Activated B cell treated with CpG ODN at 0.5 μM for 24 hours (primary cell): ENCODE measurements at regions of chr1 and their contacts with region 1.

Region 1: DNA sequence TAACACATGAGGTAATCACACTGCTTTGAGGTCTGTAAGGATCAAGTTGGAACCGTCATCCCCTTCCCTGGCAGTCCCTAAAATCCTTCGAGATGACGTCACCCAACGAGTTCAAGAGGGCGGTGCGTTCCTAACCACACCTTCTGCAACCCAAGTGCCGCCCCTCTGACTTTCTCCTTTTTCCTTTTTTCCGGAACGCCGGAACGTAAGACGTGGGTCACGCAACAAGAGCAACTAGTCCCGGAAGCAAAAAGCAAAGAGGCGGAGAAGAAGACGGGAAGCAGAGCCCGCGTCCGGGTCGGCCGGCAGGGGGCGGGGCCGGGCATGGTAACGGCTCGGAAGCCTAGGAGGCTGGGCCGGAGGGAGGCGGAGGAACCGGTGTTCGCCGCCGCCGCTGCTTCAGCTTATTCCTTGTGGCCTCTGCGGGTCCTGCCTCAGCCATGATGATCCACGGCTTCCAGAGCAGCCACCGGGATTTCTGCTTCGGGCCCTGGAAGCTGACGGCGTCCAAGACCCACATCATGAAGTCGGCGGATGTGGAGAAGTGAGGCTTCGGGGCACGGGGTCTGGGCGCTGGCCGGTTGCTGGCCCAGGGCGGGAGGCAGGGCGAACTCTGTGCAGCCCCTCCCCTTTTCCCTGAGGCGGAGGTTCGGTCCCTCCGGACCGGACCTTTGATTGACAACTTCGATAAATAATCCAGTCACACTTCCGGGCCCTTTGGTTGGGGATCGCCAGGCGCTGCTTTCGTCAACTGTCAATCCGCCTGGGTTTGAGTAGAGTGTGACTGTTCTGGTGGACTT is at the start of gene TIPRL:
- DNase-seq: peak; percentile 92
- ATAC-seq: peak; percentile 88
- H3K4me3 Mint-ChIP-seq: no peak within 1 kb of the TSS
- H3K27ac Mint-ChIP-seq: no peak within 1 kb of the TSS
- H3K4me1 Mint-ChIP-seq: peaks cover 2% of the 10 kb centered on the region
- H3K27me3 Mint-ChIP-seq: peaks cover 8% of the 10 kb centered on the region
- CTCF ChIP-seq: no peak
- total RNA-seq, gene TIPRL: 25.5 and 29.8 TPM in 2 replicates

Region 2: DNA sequence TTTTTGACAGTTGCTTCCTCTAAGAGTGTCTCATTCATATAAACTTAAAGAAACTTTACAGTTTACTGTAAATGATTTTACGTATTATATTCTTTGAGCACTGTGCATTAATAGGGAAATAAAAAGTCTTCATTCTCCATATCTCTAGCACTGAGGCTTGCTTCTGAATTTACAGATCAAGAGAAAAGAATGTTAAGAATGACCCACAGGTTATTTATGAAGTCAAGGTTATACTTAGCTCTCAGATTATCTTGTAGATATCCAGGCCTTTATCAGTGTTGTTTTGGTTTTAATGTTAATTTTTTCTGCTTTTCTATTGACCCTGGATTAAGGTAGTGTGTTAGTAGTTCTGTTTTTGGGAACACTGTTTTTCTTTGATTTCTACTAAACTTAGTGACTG is 133.5 kb before region 1 on chr1:
- CTCF ChIA-PET with region 1: no interaction called
- POLR2A ChIA-PET with region 1: no interaction called
- intact Hi-C with region 1: no loop called
- DNase-seq: no peak
- ATAC-seq: no peak
- H3K4me3 Mint-ChIP-seq: no peak overlapping the region
- H3K27ac Mint-ChIP-seq: no peak overlapping the region
- H3K4me1 Mint-ChIP-seq: no peaks in the 10 kb centered on the region
- H3K27me3 Mint-ChIP-seq: no peaks in the 10 kb centered on the region
- CTCF ChIP-seq: no peak

Region 3: DNA sequence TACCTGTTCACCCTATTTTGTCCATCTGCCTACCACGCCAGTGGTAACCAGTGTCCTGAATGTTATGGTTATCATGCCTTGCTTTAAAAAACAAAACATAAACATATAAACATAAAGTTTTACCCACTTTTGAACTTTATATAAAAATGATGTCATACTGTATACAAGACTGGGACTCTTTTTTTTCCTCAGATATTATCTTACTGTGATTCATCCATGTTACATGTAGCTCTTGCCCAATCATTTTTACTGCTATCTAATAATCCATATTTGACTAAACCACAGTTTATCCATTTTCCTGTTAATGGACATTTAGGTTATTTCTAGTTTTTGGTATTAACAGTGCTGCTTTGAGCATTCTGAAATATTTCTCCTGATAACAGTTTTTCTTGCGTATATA is 120.9 kb before region 1 on chr1:
- CTCF ChIA-PET with region 1: no interaction called
- POLR2A ChIA-PET with region 1: no interaction called
- intact Hi-C with region 1: no loop called
- DNase-seq: no peak
- ATAC-seq: no peak
- H3K4me3 Mint-ChIP-seq: no peak overlapping the region
- H3K27ac Mint-ChIP-seq: no peak overlapping the region
- H3K4me1 Mint-ChIP-seq: peaks cover 6% of the 10 kb centered on the region
- H3K27me3 Mint-ChIP-seq: no peaks in the 10 kb centered on the region
- CTCF ChIP-seq: no peak

Region 4: GRCh38 chr1:168136709-168137514 is 41.9 kb before region 1 on chr1 and contains the start of gene GPR161:
- CTCF ChIA-PET with region 1: no interaction called
- POLR2A ChIA-PET with region 1: interaction called, 3 read pairs
- intact Hi-C with region 1: loop called (anchors 1 kb)
- DNase-seq: peak; percentile 37
- ATAC-seq: peak; percentile 57
- H3K4me3 Mint-ChIP-seq: peak within 1 kb of the TSS; percentile 88
- H3K27ac Mint-ChIP-seq: peak within 1 kb of the TSS; percentile 32
- H3K4me1 Mint-ChIP-seq: peaks cover 18% of the 10 kb centered on the region
- H3K27me3 Mint-ChIP-seq: peaks cover 33% of the 10 kb centered on the region
- CTCF ChIP-seq: no peak
- total RNA-seq, gene GPR161: 0.04 and 0.32 TPM in 2 replicates

Region 5: DNA sequence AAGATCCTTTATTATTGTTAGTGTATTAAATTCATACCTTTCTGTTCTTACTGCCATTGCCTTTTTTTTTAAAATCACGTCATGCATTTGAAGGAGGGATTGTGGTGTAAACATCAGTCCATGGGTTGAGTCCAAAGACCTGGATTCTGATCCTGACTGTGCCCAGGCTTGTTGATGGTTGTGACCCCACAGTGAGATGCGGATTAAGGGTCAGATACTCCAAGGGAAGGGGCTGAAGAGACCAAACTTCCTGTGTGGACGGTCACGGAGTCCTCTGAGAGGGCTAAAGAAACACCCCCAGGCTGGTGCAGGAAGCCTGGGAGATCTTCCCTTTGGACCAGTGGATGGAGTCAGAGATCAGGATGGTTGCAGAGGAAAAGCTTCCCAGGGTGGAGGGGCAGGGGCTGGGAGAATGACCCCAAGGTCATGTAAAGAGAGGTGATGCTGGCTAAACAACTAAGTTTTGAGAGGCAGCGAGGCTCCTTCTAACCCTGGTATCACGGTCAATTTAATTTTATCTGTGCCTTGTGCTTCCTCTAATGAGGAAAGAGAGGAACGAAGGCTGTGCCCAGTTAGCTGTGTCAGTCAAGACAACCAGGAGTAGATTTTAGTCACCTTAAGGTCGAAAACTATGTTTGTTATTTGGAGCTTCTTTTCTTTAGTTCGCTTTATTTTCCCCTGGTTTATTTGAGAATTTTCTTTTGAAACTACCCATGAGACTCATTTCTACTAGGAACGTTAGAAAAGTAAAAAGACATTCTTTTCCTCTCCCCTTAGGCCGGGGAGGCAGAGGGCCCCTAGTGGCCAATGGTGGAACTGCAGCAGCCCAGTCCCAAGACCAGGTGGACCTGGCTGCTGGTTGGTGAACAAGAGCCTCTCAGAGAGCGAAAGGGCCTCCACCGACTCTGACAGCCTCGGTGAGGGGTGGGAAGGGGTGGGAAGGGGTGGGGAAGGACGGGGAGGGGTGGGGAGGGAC is 33.4 kb before region 1 on chr1:
- CTCF ChIA-PET with region 1: no interaction called
- POLR2A ChIA-PET with region 1: no interaction called
- intact Hi-C with region 1: loop called (anchors 2 kb)
- DNase-seq: peak; percentile 80
- ATAC-seq: peak; percentile 100
- H3K4me3 Mint-ChIP-seq: peak overlapping the region; percentile 32
- H3K27ac Mint-ChIP-seq: peak overlapping the region; percentile 53
- H3K4me1 Mint-ChIP-seq: peaks cover 14% of the 10 kb centered on the region
- H3K27me3 Mint-ChIP-seq: no peaks in the 10 kb centered on the region
- CTCF ChIP-seq: peak; percentile 91

Region 6: DNA sequence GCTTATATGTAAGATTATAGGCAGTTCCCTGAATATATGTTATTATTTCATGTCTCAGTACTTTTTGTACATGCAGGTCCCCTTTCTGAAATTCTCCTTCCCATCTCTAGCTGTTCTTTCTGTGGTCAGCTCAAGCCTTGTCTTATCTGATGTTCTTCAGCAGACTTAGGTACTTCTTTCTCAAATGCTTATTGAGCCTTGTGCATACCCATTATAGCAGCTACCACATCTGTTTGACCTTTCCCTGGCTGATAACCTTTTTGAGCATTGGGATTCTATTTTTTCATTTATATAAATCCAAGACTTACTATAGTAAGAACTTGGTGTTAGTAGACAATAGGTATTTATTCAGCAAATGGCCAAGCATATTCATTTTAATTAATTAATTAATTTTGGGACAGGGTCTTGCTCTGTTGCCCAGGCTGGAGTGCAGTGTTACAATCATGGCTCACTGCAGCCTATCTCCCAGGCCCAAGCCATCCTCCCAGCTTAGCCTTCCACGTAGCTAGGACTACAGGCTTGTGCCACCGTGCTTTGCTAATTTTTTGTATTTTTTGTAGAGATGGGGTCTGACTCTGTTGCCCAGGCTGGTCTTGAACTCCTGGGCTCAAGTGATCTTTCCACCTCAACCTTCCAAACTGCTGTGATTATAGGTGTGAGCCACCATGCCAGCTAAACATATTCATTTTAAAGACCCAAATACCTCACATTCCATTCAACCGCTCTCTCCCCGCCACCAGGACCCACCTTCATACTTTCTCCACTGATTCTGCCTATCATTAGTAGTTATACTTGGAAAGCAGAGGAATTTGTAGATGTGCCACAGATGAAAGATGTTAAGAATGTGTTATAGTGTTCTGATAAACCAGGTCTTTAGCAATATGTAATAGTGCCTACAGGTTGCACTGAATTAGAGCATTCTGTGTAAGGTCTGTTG is 16.6 kb after region 1 on chr1:
- CTCF ChIA-PET with region 1: no interaction called
- POLR2A ChIA-PET with region 1: no interaction called
- intact Hi-C with region 1: no loop called
- DNase-seq: no peak
- ATAC-seq: no peak
- H3K4me3 Mint-ChIP-seq: no peak overlapping the region
- H3K27ac Mint-ChIP-seq: no peak overlapping the region
- H3K4me1 Mint-ChIP-seq: no peaks in the 10 kb centered on the region
- H3K27me3 Mint-ChIP-seq: no peaks in the 10 kb centered on the region
- CTCF ChIP-seq: no peak

Region 7: GRCh38 chr1:168225476-168226190 is 46.8 kb after region 1 on chr1 and contains the start of gene SFT2D2:
- CTCF ChIA-PET with region 1: no interaction called
- POLR2A ChIA-PET with region 1: interaction called, 34 read pairs
- intact Hi-C with region 1: loop called (anchors 1 kb)
- DNase-seq: peak; percentile 85
- ATAC-seq: peak; percentile 92
- H3K4me3 Mint-ChIP-seq: peak within 1 kb of the TSS; percentile 96
- H3K27ac Mint-ChIP-seq: peak within 1 kb of the TSS; percentile 93
- H3K4me1 Mint-ChIP-seq: peaks cover 47% of the 10 kb centered on the region
- H3K27me3 Mint-ChIP-seq: no peaks in the 10 kb centered on the region
- CTCF ChIP-seq: no peak
- total RNA-seq, gene SFT2D2: 62.7 and 63.4 TPM in 2 replicates

Region 8: DNA sequence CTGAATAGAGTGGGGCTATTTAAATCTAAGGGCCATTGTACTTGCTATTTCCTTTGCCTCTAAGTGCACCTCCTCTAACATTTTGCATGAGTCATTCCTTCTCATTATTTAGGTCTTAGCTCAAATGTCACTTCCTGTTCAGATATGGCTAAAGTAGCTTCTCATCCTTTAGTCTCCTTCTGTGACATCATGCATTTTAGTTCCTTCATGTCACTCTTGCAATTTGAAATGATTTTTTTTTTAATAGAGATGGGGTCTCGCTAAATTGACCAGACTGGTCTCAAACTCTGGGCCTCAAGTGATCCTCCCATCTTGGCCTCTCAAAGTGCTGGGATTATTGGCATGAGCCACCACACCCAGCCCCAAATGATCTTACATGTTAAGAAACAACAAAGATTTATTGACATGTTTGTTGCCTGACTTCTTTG is 108.4 kb after region 1 on chr1:
- CTCF ChIA-PET with region 1: no interaction called
- POLR2A ChIA-PET with region 1: no interaction called
- intact Hi-C with region 1: no loop called
- DNase-seq: no peak
- ATAC-seq: no peak
- H3K4me3 Mint-ChIP-seq: no peak overlapping the region
- H3K27ac Mint-ChIP-seq: no peak overlapping the region
- H3K4me1 Mint-ChIP-seq: no peaks in the 10 kb centered on the region
- H3K27me3 Mint-ChIP-seq: no peaks in the 10 kb centered on the region
- CTCF ChIP-seq: no peak

Region 9: GRCh38 chr1:170074250-170075157 is 1895.7 kb after region 1 on chr1 and contains the start of gene KIFAP3:
- CTCF ChIA-PET with region 1: no interaction called
- POLR2A ChIA-PET with region 1: no interaction called
- intact Hi-C with region 1: loop called (anchors 5 kb)
- DNase-seq: peak; percentile 89
- ATAC-seq: peak; percentile 93
- H3K4me3 Mint-ChIP-seq: peak within 1 kb of the TSS; percentile 94
- H3K27ac Mint-ChIP-seq: peak within 1 kb of the TSS; percentile 87
- H3K4me1 Mint-ChIP-seq: peaks cover 52% of the 10 kb centered on the region
- H3K27me3 Mint-ChIP-seq: peaks cover 2% of the 10 kb centered on the region
- CTCF ChIP-seq: no peak
- total RNA-seq, gene KIFAP3: 11.8 and 12.7 TPM in 2 replicates